ENCODE measurements at regions of chr4 and their contacts with region 1.

Region 1: DNA sequence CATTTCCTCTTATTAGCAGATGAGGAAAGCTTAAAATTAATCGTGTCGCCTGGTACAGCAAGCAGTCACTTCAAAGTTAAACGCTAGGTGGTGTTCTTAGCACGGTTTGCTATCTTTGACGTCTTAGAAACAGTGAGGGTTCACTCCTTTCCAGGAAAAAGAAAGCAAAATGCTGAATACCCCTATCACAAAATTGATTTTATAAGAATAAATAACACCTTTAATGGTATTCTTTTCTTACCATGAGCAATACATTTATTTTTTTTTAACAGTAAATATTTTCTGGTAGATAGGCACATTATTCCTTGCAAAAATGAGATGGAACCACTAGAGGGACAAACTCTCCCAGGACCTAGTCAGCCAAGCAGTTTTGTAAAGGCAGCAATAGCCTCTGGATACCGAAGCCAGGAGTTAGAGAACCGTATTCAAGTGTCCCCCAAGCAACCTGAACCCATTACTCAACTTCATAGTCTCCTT is 153.9 kb downstream of the KDR start:
- DNase-seq: peak; percentile 63
- H3K4me3 Mint-ChIP-seq: no peak overlapping the region
- H3K27ac Mint-ChIP-seq: peak overlapping the region; percentile 78
- H3K4me1 Mint-ChIP-seq: peaks cover 6% of the 10 kb centered on the region
- H3K27me3 Mint-ChIP-seq: no peaks in the 10 kb centered on the region
- CTCF ChIP-seq: peak; percentile 65

Region 2: DNA sequence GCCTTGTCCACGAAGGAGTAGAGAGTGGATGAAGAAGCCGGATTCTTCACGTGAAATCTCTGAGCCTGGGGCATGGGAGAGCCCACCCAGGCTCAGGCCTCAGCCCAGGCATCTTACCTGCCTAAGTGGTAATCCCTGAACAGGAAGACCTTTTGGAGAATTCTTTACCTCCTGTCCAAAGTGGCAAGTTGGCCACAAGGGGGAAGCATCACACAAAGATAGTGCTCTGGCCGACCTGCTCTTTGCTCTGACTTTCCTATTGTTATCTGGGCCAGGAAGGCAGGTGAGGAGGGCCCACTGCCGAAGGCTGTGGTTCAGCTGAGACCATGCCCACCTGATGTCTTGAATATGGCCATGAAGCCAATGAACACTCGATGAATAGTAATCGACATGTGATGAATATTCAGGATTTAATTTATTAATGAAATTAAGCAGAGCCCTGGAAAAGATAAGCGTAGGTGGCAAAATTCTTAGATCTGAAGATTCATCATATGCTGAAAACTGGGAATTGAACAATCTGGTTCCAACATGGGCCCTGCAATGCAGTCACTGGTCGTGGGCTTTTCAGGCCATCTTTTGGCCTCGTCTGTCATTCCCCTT is 648.6 kb before region 1 on chr4:
- CTCF ChIA-PET with region 1: interaction called, 13 read pairs
- POLR2A ChIA-PET with region 1: no interaction called
- intact Hi-C with region 1: no loop called
- DNase-seq: peak; percentile 85
- H3K4me3 Mint-ChIP-seq: no peak overlapping the region
- H3K27ac Mint-ChIP-seq: no peak overlapping the region
- H3K4me1 Mint-ChIP-seq: no peaks in the 10 kb centered on the region
- H3K27me3 Mint-ChIP-seq: no peaks in the 10 kb centered on the region
- CTCF ChIP-seq: peak; percentile 85

Region 3: DNA sequence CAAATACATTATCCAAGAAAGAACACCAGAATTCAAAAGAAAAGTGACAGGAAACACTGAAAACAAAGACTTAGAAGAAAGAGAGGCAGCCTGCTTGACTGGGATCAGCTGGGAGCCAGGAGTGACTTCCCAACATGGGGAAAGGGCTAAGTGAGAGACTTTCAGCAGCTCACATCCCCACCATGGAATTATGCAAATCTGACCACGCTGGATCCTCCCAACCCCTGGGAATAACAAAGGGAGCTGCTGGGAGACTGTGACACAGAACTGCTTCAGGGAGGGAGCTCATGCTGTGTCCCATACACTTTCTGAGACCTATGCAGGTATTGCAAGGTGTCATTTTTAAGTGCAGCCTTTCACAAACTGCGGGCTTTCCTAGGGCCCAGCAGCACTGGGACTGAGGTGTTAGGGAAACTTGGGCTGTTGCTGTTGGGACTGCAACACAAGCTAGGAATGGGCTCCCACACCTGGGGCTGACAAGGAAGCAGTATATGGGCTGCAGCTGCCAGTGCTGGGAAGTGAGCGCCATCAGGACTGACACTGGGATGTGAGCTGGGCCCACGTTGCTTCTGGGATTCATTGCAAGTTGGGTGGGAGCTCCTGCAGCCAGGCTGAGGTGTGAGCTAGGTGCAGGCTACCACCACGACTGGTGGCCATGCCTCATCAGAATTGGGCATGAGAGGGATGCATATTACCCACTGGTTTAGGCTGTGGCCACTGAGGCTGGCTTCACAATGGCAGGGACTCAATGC is 14.8 kb after region 1 on chr4:
- CTCF ChIA-PET with region 1: interaction called, 18 read pairs
- POLR2A ChIA-PET with region 1: no interaction called
- intact Hi-C with region 1: no loop called
- DNase-seq: no peak
- H3K4me3 Mint-ChIP-seq: no peak overlapping the region
- H3K27ac Mint-ChIP-seq: no peak overlapping the region
- H3K4me1 Mint-ChIP-seq: no peaks in the 10 kb centered on the region
- H3K27me3 Mint-ChIP-seq: no peaks in the 10 kb centered on the region
- CTCF ChIP-seq: no peak

Region 4: GRCh38 chr4:55184600-55185523 is 213.3 kb after region 1 on chr4:
- CTCF ChIA-PET with region 1: interaction called, 20 read pairs
- POLR2A ChIA-PET with region 1: no interaction called
- intact Hi-C with region 1: no loop called
- DNase-seq: peak; percentile 47
- H3K4me3 Mint-ChIP-seq: no peak overlapping the region
- H3K27ac Mint-ChIP-seq: peak overlapping the region; percentile 84
- H3K4me1 Mint-ChIP-seq: peaks cover 29% of the 10 kb centered on the region
- H3K27me3 Mint-ChIP-seq: no peaks in the 10 kb centered on the region
- CTCF ChIP-seq: peak; percentile 37

Region 5: GRCh38 chr4:55330241-55330640 is 358.7 kb after region 1 on chr4:
- CTCF ChIA-PET with region 1: interaction called, 29 read pairs
- POLR2A ChIA-PET with region 1: no interaction called
- intact Hi-C with region 1: no loop called
- DNase-seq: no peak
- H3K4me3 Mint-ChIP-seq: no peak overlapping the region
- H3K27ac Mint-ChIP-seq: no peak overlapping the region
- H3K4me1 Mint-ChIP-seq: no peaks in the 10 kb centered on the region
- H3K27me3 Mint-ChIP-seq: no peaks in the 10 kb centered on the region
- CTCF ChIP-seq: no peak

Region 6: DNA sequence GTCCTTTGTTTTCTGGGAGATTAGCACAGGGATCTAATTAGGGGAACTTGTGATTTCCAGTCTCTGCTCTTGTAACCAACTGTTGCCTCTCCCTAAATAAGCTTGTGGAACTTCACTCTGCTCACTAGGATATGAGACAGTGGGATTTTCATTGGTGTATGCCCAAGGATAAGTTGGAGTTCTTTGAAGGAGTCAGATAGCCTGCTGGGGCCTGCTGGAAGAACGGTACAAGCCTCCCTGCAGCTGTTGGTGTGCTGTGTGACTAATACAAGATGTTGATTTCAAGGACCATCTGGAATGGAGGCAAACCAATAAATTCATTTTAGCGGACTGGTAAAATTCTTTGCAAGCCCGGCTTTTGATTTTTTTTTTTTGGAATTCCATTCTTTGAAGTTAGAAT is 1248.7 kb after region 1 on chr4:
- CTCF ChIA-PET with region 1: no interaction called
- POLR2A ChIA-PET with region 1: no interaction called
- intact Hi-C with region 1: no loop called
- DNase-seq: no peak
- H3K4me3 Mint-ChIP-seq: no peak overlapping the region
- H3K27ac Mint-ChIP-seq: no peak overlapping the region
- H3K4me1 Mint-ChIP-seq: peaks cover 11% of the 10 kb centered on the region
- H3K27me3 Mint-ChIP-seq: no peaks in the 10 kb centered on the region
- CTCF ChIP-seq: no peak

Measured in MCF 10A (cell line).